CD4-positive, alpha-beta T cell (primary cell): ENCODE measurements at regions of chr1 and their contacts with region 1.

Region 1: DNA sequence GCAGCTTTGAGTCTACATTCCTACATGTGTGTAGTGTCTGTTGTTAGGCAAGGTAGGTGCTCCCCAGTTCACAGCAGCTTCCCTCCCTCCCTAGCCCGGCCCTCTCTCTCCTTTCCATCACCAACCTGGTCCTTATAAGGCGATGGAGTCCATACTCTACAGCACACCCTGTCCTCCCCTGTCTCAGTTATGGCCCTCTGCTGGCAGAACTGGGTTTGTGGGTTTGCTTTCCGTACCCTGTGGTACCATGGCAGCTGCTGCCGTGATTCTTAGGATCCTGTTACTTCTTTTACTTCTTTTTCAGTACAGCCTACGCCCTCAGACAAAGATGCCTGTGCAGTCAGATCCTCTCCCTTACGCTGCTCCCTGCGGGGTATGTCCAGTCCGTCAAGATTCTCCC is 31.7 kb downstream of the AK5 start:
- DNase-seq: peak in 9 of 14 experiments; percentile 10 to 51 (median 25)
- ATAC-seq: peak; percentile 30
- H3K4me3 ChIP-seq: no peak overlapping the region
- H3K4me3 Mint-ChIP-seq: no peak overlapping the region
- H3K27ac ChIP-seq: no peak overlapping the region
- H3K27ac Mint-ChIP-seq: peak overlapping the region; percentile 21
- H3K4me1 ChIP-seq: peaks cover 10% of the 10 kb centered on the region
- H3K4me1 Mint-ChIP-seq: peaks cover 53% of the 10 kb centered on the region
- H3K27me3 ChIP-seq: no peaks in the 10 kb centered on the region
- H3K27me3 Mint-ChIP-seq: no peaks in the 10 kb centered on the region
- CTCF ChIP-seq: no peak

Region 2: GRCh38 chr1:75316230-75316629 is 1997.3 kb before region 1 on chr1:
- CTCF ChIA-PET with region 1: no interaction called
- POLR2A ChIA-PET with region 1: no interaction called
- intact Hi-C with region 1: no loop called
- DNase-seq: no peak
- ATAC-seq: no peak
- H3K4me3 ChIP-seq: no peak overlapping the region
- H3K4me3 Mint-ChIP-seq: no peak overlapping the region
- H3K27ac ChIP-seq: no peak overlapping the region
- H3K27ac Mint-ChIP-seq: no peak overlapping the region
- H3K4me1 ChIP-seq: no peaks in the 10 kb centered on the region
- H3K4me1 Mint-ChIP-seq: no peaks in the 10 kb centered on the region
- H3K27me3 ChIP-seq: no peaks in the 10 kb centered on the region
- H3K27me3 Mint-ChIP-seq: no peaks in the 10 kb centered on the region
- CTCF ChIP-seq: no peak

Region 3: GRCh38 chr1:77267035-77267434 is 46.5 kb before region 1 on chr1:
- CTCF ChIA-PET with region 1: no interaction called
- POLR2A ChIA-PET with region 1: interaction called, 3 read pairs
- intact Hi-C with region 1: loop called in 1 of 2 experiments (anchors 5 kb)
- DNase-seq: peak in 1 of 14 experiments; percentile 23
- ATAC-seq: peak; percentile 73
- H3K4me3 ChIP-seq: no peak overlapping the region
- H3K4me3 Mint-ChIP-seq: no peak overlapping the region
- H3K27ac ChIP-seq: no peak overlapping the region
- H3K27ac Mint-ChIP-seq: no peak overlapping the region
- H3K4me1 ChIP-seq: no peaks in the 10 kb centered on the region
- H3K4me1 Mint-ChIP-seq: no peaks in the 10 kb centered on the region
- H3K27me3 ChIP-seq: no peaks in the 10 kb centered on the region
- H3K27me3 Mint-ChIP-seq: no peaks in the 10 kb centered on the region
- CTCF ChIP-seq: no peak

Region 4: DNA sequence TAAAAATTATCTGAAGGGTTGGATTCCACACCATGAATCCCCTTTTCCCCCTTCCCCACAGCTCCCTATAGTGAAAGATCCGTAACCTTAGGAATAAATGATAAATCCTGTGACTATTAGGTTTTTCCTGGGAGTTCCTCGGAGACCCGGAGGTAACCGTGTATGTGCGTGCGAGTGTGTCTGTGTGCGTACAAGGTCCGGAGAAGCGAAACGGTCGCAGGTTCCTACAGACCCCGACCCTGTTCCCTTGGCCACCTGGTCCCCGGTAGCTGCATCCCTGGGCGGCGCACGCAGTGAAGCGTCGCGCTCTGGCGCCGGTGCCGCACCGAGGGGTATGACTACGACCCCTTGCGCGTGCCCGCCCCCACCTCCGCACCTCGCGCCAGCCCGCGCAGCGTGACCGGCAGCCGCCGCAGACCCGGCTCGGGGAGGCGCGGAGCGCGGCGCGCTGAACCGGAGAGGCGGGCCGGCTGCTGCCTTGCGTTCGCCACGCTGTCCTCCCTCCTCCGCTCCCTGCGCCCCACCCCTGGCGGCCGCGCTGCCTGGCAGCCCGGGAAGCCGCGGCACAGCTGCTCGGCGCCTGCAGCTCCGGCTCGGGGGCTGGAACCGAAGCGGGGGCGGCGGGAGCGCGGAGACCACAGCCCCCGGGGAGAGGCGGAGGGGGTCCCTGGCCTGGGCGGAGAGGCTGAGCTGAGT is 31.9 kb before region 1 on chr1 and contains the start of gene AK5:
- CTCF ChIA-PET with region 1: no interaction called
- POLR2A ChIA-PET with region 1: interaction called, 35 read pairs
- intact Hi-C with region 1: no loop called
- DNase-seq: peak; percentile 13 to 71 (median 45)
- ATAC-seq: peak; percentile 73
- H3K4me3 ChIP-seq: peak within 1 kb of the TSS; percentile 69
- H3K4me3 Mint-ChIP-seq: peak within 1 kb of the TSS; percentile 88
- H3K27ac ChIP-seq: peak within 1 kb of the TSS in 1 of 2 donors; percentile 51
- H3K27ac Mint-ChIP-seq: peak within 1 kb of the TSS; percentile 62
- H3K4me1 ChIP-seq: peaks cover 33% of the 10 kb centered on the region
- H3K4me1 Mint-ChIP-seq: peaks cover 55% of the 10 kb centered on the region
- H3K27me3 ChIP-seq: peaks cover 0 to 11% of the 10 kb centered on the region in 2 experiments
- H3K27me3 Mint-ChIP-seq: no peaks in the 10 kb centered on the region
- CTCF ChIP-seq: no peak
- total RNA-seq, gene AK5: 32.0 TPM

Region 5: GRCh38 chr1:77360256-77360655 is 46.8 kb after region 1 on chr1:
- CTCF ChIA-PET with region 1: no interaction called
- POLR2A ChIA-PET with region 1: no interaction called
- intact Hi-C with region 1: no loop called
- DNase-seq: no peak
- ATAC-seq: no peak
- H3K4me3 ChIP-seq: no peak overlapping the region
- H3K4me3 Mint-ChIP-seq: no peak overlapping the region
- H3K27ac ChIP-seq: no peak overlapping the region
- H3K27ac Mint-ChIP-seq: peak overlapping the region; percentile 1
- H3K4me1 ChIP-seq: no peaks in the 10 kb centered on the region
- H3K4me1 Mint-ChIP-seq: peaks cover 15% of the 10 kb centered on the region
- H3K27me3 ChIP-seq: no peaks in the 10 kb centered on the region
- H3K27me3 Mint-ChIP-seq: no peaks in the 10 kb centered on the region
- CTCF ChIP-seq: no peak

Region 6: GRCh38 chr1:77430966-77431690 is 117.6 kb after region 1 on chr1:
- CTCF ChIA-PET with region 1: no interaction called
- POLR2A ChIA-PET with region 1: interaction called, 13 read pairs
- intact Hi-C with region 1: no loop called
- DNase-seq: peak in 4 of 14 experiments; percentile 21 to 81 (median 62)
- ATAC-seq: peak; percentile 94
- H3K4me3 ChIP-seq: peak overlapping the region; percentile 19
- H3K4me3 Mint-ChIP-seq: no peak overlapping the region
- H3K27ac ChIP-seq: peak overlapping the region; percentile 62 to 83
- H3K27ac Mint-ChIP-seq: no peak overlapping the region
- H3K4me1 ChIP-seq: peaks cover 37% of the 10 kb centered on the region
- H3K4me1 Mint-ChIP-seq: peaks cover 18% of the 10 kb centered on the region
- H3K27me3 ChIP-seq: no peaks in the 10 kb centered on the region
- H3K27me3 Mint-ChIP-seq: no peaks in the 10 kb centered on the region
- CTCF ChIP-seq: no peak